A549 (cell line): ENCODE measurements at regions of chr1 and their contacts with region 1.

Region 1: GRCh38 chr1:155084722-155085503 is 6.3 kb downstream of the EFNA3 start:
- DNase-seq: peak; percentile 95
- ATAC-seq: peak; percentile 77 to 85
- H3K4me3 ChIP-seq: peak overlapping the region; percentile 59
- H3K27ac ChIP-seq: peak overlapping the region; percentile 74 to 88
- H3K4me1 ChIP-seq: peaks cover 47% of the 10 kb centered on the region
- CTCF ChIP-seq: peak; percentile 82
- EP300 ChIP-seq: no peak
- POLR2A ChIP-seq: peak; percentile 11; the same call in 1 of the 2 replicates
- RAD21 ChIP-seq: peak; percentile 95 to 98

Region 2: GRCh38 chr1:155017041-155017945 is 67.6 kb before region 1 on chr1:
- CTCF ChIA-PET with region 1: interaction called, 10 read pairs
- POLR2A ChIA-PET with region 1: no interaction called
- DNase-seq: peak; percentile 84 to 98
- ATAC-seq: peak; percentile 83 to 90
- H3K4me3 ChIP-seq: peak overlapping the region; percentile 29
- H3K27ac ChIP-seq: peak overlapping the region; percentile 96 to 99
- H3K4me1 ChIP-seq: peaks cover 74% of the 10 kb centered on the region
- CTCF ChIP-seq: peak; percentile 100
- EP300 ChIP-seq: peak in 1 of 2 experiments; percentile 30; a peak in 1 of 5 replicates
- POLR2A ChIP-seq: no peak
- RAD21 ChIP-seq: peak; percentile 85 to 97

Region 3: DNA sequence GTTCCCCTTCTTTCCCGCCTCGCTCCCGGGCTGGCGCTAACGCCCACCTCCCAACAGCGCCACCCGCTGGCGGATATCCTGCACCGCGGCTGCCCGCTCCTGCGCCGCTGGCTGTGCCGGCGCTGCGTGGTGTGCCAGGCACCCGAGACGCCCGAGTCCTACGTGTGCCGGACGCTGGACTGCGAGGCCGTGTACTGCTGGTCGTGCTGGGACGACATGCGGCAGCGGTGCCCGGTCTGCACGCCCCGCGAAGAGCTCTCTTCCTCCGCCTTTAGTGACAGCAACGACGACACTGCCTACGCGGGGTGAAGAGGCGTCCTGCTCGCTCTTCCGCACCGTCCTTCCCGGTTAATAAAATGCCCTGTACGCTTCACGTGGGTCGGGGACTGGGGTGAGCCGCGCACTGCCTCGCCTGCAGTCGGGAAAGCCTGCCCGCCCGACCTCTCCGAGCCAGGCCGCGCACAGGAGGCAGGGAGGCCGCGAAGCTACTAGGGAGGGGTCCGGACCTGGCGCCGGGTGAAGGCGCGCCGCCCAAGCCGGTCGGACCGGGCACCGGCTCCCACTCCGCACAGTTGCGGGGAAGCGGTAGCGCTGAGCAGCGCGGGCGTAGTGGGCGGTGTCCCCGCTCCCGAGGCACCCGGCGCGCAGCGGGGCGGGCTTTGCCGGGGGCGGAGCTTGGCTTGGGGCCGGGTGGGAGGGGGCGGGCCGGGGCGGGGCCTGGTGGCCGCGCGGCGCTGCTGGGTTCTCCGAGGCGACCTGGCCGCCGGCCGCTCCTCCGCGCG is 34.2 kb before region 1 on chr1 and contains the start of gene ADAM15:
- CTCF ChIA-PET with region 1: interaction called, 350 read pairs
- POLR2A ChIA-PET with region 1: interaction called, 3 read pairs
- DNase-seq: peak; percentile 84 to 90
- ATAC-seq: peak; percentile 66 to 77
- H3K4me3 ChIP-seq: peak within 1 kb of the TSS; percentile 94
- H3K27ac ChIP-seq: peak within 1 kb of the TSS; percentile 93 to 94
- H3K4me1 ChIP-seq: peaks cover 22% of the 10 kb centered on the region
- CTCF ChIP-seq: peak; percentile 89
- EP300 ChIP-seq: no peak
- POLR2A ChIP-seq: peak; percentile 64
- RAD21 ChIP-seq: peak; percentile 54 to 60
- polyA plus RNA-seq, gene ADAM15: 25.6 and 33.6 TPM in 2 replicates

Region 4: GRCh38 chr1:155105604-155106022 is 20.7 kb after region 1 on chr1:
- CTCF ChIA-PET with region 1: interaction called, 67 read pairs
- POLR2A ChIA-PET with region 1: no interaction called
- DNase-seq: no peak
- ATAC-seq: no peak
- H3K4me3 ChIP-seq: no peak overlapping the region
- H3K27ac ChIP-seq: no peak overlapping the region
- H3K4me1 ChIP-seq: no peaks in the 10 kb centered on the region
- CTCF ChIP-seq: no peak
- EP300 ChIP-seq: no peak
- POLR2A ChIP-seq: no peak
- RAD21 ChIP-seq: no peak

Region 5: DNA sequence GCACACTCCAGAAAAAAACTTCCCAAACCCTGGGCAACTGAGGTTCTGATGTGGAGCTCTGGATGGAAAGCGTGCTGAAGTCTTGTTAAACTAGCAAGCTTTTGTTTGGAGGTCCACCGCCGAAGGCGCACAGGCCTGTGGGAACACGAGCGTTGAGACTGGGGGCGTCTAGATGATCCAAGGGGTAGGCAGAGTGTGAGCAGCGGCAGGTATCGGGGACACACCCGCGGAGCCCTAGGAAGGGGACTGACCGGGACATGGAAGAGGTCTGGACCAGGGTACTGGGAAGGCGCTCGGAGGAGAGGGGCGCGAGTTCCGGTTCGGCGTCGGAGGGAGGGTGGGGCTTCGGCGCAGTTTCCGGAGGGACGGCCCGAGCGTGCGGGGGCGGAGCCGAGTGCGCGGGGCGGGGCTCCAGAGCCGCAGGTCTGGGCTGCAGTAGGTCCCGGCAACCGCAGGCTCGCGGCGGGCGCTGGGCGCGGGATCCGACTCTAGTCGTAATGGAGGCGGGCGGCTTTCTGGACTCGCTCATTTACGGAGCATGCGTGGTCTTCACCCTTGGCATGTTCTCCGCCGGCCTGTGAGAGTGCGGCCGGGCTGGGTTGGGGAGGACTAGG is 50.6 kb after region 1 on chr1 and contains the start of gene SLC50A1:
- CTCF ChIA-PET with region 1: interaction called, 309 read pairs
- POLR2A ChIA-PET with region 1: no interaction called
- DNase-seq: peak; percentile 91 to 93
- ATAC-seq: peak; percentile 76 to 88
- H3K4me3 ChIP-seq: peak within 1 kb of the TSS; percentile 60
- H3K27ac ChIP-seq: peak within 1 kb of the TSS; percentile 90 to 92
- H3K4me1 ChIP-seq: peaks cover 34% of the 10 kb centered on the region
- CTCF ChIP-seq: no peak
- EP300 ChIP-seq: no peak
- POLR2A ChIP-seq: peak; percentile 77
- RAD21 ChIP-seq: no peak
- polyA plus RNA-seq, gene SLC50A1: 39.3 and 39.4 TPM in 2 replicates

Region 6: GRCh38 chr1:155193275-155193990 is 108.5 kb after region 1 on chr1:
- CTCF ChIA-PET with region 1: interaction called, 12 read pairs
- POLR2A ChIA-PET with region 1: no interaction called
- DNase-seq: peak; percentile 84 to 93
- ATAC-seq: peak; percentile 76 to 90
- H3K4me3 ChIP-seq: peak overlapping the region; percentile 79
- H3K27ac ChIP-seq: peak overlapping the region; percentile 84 to 96
- H3K4me1 ChIP-seq: peaks cover 22% of the 10 kb centered on the region
- CTCF ChIP-seq: peak; percentile 95
- EP300 ChIP-seq: no peak
- POLR2A ChIP-seq: peak; percentile 49; the same call in 1 of the 2 replicates
- RAD21 ChIP-seq: peak; percentile 59 to 64; a peak in 4 of 5 replicates

Region 7: DNA sequence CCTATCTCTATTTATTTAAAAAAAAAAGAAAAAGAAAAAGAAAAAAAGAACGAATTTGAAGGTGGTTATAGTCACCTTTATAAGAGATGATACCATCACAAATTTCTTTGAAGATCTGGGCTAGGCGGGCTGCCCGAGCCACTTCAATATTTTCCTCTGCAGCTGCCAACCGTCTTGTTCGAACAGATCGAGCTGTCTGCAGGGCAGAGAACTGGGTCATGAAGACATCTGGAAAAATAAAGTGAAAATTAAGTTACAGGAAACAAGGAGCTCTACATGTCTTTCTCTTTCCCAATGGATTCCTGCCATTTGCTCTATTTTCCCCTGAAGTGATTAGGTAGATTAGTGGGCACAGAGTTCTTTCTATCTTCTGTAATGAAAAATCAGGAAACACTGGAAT is 267.7 kb after region 1 on chr1:
- CTCF ChIA-PET with region 1: no interaction called
- POLR2A ChIA-PET with region 1: no interaction called
- DNase-seq: no peak
- ATAC-seq: no peak
- H3K4me3 ChIP-seq: no peak overlapping the region
- H3K27ac ChIP-seq: no peak overlapping the region
- H3K4me1 ChIP-seq: no peaks in the 10 kb centered on the region
- CTCF ChIP-seq: no peak
- EP300 ChIP-seq: no peak
- POLR2A ChIP-seq: no peak
- RAD21 ChIP-seq: no peak